ENCODE measurements at regions of chr18 and their contacts with region 1.

Region 1: GRCh38 chr18:35117951-35118411 is 76.8 kb downstream of the MAPRE2 start:
- DNase-seq: no peak
- H3K4me3 ChIP-seq: peak overlapping the region; percentile 17 to 38 (median 28)
- H3K27ac ChIP-seq: peak overlapping the region; percentile 76 to 85 (median 81)
- H3K4me1 ChIP-seq: peaks cover 43 to 59% (median 46%) of the 10 kb centered on the region in 4 donors
- H3K27me3 ChIP-seq: no peaks in the 10 kb centered on the region
- CTCF ChIP-seq: no peak
- EP300 ChIP-seq: no peak
- POLR2A ChIP-seq: no peak

Region 2: GRCh38 chr18:35040988-35041814 is 76.8 kb before region 1 on chr18 and contains the start of gene MAPRE2:
- intact Hi-C with region 1: loop called (anchors 5 kb)
- DNase-seq: peak; percentile 100
- H3K4me3 ChIP-seq: peak within 1 kb of the TSS; percentile 68 to 91 (median 84)
- H3K27ac ChIP-seq: peak within 1 kb of the TSS; percentile 86 to 89 (median 88)
- H3K4me1 ChIP-seq: peaks cover 35 to 53% (median 50%) of the 10 kb centered on the region in 4 donors
- H3K27me3 ChIP-seq: no peaks in the 10 kb centered on the region
- CTCF ChIP-seq: no peak
- EP300 ChIP-seq: no peak
- POLR2A ChIP-seq: peak; percentile 83
- total RNA-seq, gene MAPRE2: 22.2 to 32.2 (median 24.5) TPM